ENCODE measurements at regions of chr4 and their contacts with region 1.

Region 1: GRCh38 chr4:79467246-79467932 is 59.4 kb upstream of the GK2 start:
- DNase-seq: no peak
- H3K4me3 ChIP-seq: no peak overlapping the region
- H3K27ac ChIP-seq: no peak overlapping the region
- H3K4me1 ChIP-seq: no peaks in the 10 kb centered on the region
- H3K27me3 ChIP-seq: no peaks in the 10 kb centered on the region
- CTCF ChIP-seq: no peak
- EP300 ChIP-seq: no peak
- POLR2A ChIP-seq: no peak

Region 2: GRCh38 chr4:78902298-78902697 is 565.1 kb before region 1 on chr4:
- intact Hi-C with region 1: no loop called
- DNase-seq: no peak
- H3K4me3 ChIP-seq: no peak overlapping the region
- H3K27ac ChIP-seq: no peak overlapping the region
- H3K4me1 ChIP-seq: no peaks in the 10 kb centered on the region
- H3K27me3 ChIP-seq: no peaks in the 10 kb centered on the region
- CTCF ChIP-seq: no peak
- EP300 ChIP-seq: no peak
- POLR2A ChIP-seq: no peak

Region 3: GRCh38 chr4:80685214-80685613 is 1217.8 kb after region 1 on chr4:
- intact Hi-C with region 1: loop called in 1 of 4 experiments (anchors 5 kb)
- DNase-seq: no peak
- H3K4me3 ChIP-seq: no peak overlapping the region
- H3K27ac ChIP-seq: no peak overlapping the region
- H3K4me1 ChIP-seq: no peaks in the 10 kb centered on the region
- H3K27me3 ChIP-seq: no peaks in the 10 kb centered on the region
- CTCF ChIP-seq: no peak
- EP300 ChIP-seq: no peak
- POLR2A ChIP-seq: no peak

Measured in ovary (tissue), 10 donors.